Caco-2 (cell line): ENCODE measurements at regions of chr14 and their contacts with region 1.

Region 1: DNA sequence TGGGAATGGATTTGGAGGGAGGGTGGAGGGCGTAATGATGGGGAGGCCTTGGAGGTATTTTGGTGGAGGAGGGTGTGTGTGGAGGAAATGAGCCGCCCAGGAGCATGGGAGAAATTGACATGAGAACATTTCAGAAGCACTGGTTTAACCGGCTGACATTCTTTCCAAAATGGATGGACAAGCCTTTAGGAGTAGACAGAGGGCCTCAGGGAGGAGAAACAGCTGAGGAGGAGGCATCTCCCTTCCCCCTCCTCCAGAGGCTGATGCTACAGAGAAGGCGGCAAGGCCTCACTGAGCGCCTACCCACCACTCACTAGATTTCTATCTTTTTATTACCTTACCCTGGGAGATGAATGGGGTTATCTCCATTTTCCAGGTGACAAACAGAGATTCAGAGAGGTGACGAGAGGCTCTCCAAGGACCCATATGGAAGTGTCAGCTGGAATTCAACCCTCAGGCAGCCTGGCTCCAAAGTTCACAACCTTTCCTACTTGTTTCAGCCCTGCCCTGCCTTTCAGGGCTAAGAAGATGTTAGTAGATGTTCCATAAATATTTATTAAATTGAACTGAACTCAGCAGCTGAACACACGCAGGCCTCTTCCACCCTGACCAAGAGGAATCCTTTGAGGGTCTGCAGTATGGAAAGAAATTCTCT is 289.6 kb downstream of the ZFP36L1 start:
- DNase-seq: peak; percentile 36 to 71
- H3K4me3 ChIP-seq: no peak overlapping the region
- H3K4me3 Mint-ChIP-seq: no peak overlapping the region
- H3K27ac Mint-ChIP-seq: peak overlapping the region; percentile 60
- H3K4me1 ChIP-seq: peaks cover 33% of the 10 kb centered on the region
- H3K4me1 Mint-ChIP-seq: peaks cover 27% of the 10 kb centered on the region
- H3K27me3 ChIP-seq: no peaks in the 10 kb centered on the region
- H3K27me3 Mint-ChIP-seq: no peaks in the 10 kb centered on the region
- CTCF ChIP-seq: no peak

Region 2: GRCh38 chr14:68458840-68459469 is 44.4 kb before region 1 on chr14:
- CTCF ChIA-PET with region 1: no interaction called
- POLR2A ChIA-PET with region 1: no interaction called
- intact Hi-C with region 1: loop called (anchors 1 kb)
- DNase-seq: peak; percentile 67 to 87
- H3K4me3 ChIP-seq: no peak overlapping the region
- H3K4me3 Mint-ChIP-seq: peak overlapping the region; percentile 36
- H3K27ac Mint-ChIP-seq: peak overlapping the region; percentile 84
- H3K4me1 ChIP-seq: peaks cover 20% of the 10 kb centered on the region
- H3K4me1 Mint-ChIP-seq: peaks cover 27% of the 10 kb centered on the region
- H3K27me3 ChIP-seq: no peaks in the 10 kb centered on the region
- H3K27me3 Mint-ChIP-seq: no peaks in the 10 kb centered on the region
- CTCF ChIP-seq: no peak

Region 3: DNA sequence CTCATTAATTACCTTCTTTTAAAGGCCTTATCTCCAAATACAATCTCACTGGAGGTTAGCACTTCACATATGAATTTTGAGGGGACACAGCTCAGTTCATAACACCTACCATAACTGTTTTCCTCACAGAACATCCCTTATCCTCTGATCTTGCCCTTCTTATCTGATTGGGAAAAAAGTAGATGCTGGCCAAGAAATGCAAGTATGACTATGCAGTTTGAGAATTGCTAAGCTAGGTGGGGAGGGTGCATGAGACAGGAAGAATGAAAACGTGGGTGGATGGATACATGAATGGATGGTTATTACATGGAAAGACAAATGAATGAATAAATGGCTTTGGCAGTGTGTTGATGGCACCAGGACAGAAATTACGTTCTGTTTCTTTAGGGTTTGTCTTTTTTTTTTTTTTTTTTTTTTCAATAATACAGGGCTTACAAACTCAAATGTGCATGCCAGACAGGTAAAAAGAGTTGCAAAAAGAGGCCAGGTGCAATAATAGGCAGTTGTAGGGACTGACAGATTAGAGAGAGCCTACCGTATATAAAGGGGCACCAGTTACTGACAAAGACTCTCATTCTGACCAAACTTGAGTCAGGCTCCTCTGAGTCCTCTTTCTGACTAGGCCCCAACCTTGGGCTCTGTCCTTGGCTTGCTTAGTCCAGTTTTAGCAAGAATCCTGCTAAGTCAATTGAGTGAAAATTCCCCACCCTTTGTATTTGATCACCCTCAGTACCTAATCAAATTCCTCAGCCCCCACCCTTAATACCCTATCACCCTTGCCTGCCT is 15.3 kb before region 1 on chr14:
- CTCF ChIA-PET with region 1: no interaction called
- POLR2A ChIA-PET with region 1: no interaction called
- intact Hi-C with region 1: no loop called
- DNase-seq: no peak
- H3K4me3 ChIP-seq: no peak overlapping the region
- H3K4me3 Mint-ChIP-seq: no peak overlapping the region
- H3K27ac Mint-ChIP-seq: peak overlapping the region; percentile 94
- H3K4me1 ChIP-seq: peaks cover 50% of the 10 kb centered on the region
- H3K4me1 Mint-ChIP-seq: peaks cover 55% of the 10 kb centered on the region
- H3K27me3 ChIP-seq: no peaks in the 10 kb centered on the region
- H3K27me3 Mint-ChIP-seq: no peaks in the 10 kb centered on the region
- CTCF ChIP-seq: no peak